ENCODE measurements at regions of chr16 and their contacts with region 1.

Region 1: DNA sequence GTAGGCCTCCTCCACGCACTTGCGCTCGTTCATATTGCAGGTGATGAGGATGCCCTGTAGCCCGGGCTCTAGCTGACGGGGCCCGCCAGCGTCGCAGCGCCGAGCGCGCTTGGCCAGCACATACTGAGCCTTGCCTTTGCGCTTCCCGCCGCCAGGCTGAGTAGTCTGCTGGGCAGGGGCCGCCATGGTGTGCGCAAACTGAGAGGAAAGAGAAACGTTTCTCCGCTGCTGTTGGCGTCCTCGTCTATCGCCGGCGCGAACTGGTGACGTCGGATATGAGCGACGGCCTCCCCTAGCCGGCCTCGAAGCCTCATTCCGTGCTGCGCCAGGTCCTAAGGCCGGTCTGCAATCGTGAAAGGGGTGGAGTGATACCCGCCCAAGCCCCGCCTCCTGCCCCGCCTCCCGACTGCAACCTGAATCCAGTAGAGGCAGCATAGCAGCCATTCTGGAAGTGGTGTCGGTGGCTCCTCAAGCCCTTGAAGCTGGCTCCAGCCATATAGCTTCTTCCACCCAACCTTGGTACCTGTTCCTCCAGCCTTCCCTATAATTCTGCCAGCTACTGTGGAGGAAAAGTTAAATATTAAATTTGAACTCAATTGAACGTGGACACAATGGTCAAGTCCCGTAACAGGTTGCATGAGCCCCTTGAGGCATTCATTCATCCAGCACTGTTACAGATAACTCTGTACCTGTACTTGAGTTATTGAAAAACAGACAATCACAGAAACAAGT is at the start of gene THUMPD1:
- DNase-seq: peak; percentile 96
- ATAC-seq: peak; percentile 91
- H3K4me3 ChIP-seq: peak within 1 kb of the TSS; percentile 74 to 100 (median 90)
- H3K4me3 Mint-ChIP-seq: peak within 1 kb of the TSS; percentile 95
- H3K27ac ChIP-seq: peak within 1 kb of the TSS; percentile 90 to 97
- H3K27ac Mint-ChIP-seq: peak within 1 kb of the TSS; percentile 97
- H3K4me1 ChIP-seq: peaks cover 19 to 23% of the 10 kb centered on the region in 2 donors
- H3K4me1 Mint-ChIP-seq: peaks cover 22% of the 10 kb centered on the region
- H3K27me3 ChIP-seq: no peaks in the 10 kb centered on the region
- H3K27me3 Mint-ChIP-seq: no peaks in the 10 kb centered on the region
- CTCF ChIP-seq: no peak
- total RNA-seq, gene THUMPD1: 52.5 and 54.3 TPM in 2 replicates

Region 2: DNA sequence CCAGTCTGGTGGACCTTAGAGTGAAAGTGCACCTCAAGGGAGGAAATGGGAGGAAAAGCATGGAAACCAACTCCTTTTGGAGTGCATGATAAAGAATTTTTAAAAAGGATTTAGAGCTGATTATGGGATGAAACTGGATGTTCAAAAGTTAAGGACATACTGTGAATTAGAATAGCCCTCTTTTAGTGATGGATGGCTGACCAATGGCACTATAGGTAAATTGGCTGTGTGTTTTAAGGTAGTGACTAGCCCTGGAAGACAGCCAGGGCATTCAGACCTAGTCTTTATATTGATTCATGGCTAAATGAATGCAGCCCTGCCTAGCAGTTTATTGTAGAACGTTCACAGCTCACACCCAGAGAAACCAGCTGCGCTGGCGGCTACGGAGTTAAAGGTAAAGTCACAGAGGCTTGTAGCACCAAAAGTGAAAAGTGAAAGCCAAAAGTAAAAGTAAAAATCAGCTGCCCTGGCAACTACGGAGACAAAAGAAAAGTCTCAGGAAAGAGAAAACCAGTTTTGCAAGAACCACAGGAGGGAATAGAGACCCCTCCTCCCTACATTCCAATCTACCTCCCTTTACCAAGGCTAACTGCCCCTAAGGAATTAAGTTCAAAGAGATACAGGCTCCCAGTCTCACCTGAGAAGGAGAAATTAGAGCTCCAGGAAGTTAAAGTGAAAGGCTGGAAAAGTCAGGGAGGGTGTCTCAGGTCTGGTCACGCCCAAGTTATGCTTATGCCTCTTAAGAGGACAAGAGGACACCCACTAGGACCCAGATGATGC is 66.0 kb before region 1 on chr16:
- CTCF ChIA-PET with region 1: interaction called, 13 read pairs
- POLR2A ChIA-PET with region 1: interaction called, 4 read pairs
- intact Hi-C with region 1: loop called (anchors 2 kb)
- DNase-seq: peak; percentile 63
- ATAC-seq: peak; percentile 63
- H3K4me3 ChIP-seq: peak overlapping the region; percentile 48 to 77 (median 61)
- H3K4me3 Mint-ChIP-seq: peak overlapping the region; percentile 95
- H3K27ac ChIP-seq: peak overlapping the region; percentile 87 to 94
- H3K27ac Mint-ChIP-seq: peak overlapping the region; percentile 91
- H3K4me1 ChIP-seq: peaks cover 45 to 59% of the 10 kb centered on the region in 2 donors
- H3K4me1 Mint-ChIP-seq: peaks cover 50% of the 10 kb centered on the region
- H3K27me3 ChIP-seq: no peaks in the 10 kb centered on the region
- H3K27me3 Mint-ChIP-seq: no peaks in the 10 kb centered on the region
- CTCF ChIP-seq: no peak

Region 3: DNA sequence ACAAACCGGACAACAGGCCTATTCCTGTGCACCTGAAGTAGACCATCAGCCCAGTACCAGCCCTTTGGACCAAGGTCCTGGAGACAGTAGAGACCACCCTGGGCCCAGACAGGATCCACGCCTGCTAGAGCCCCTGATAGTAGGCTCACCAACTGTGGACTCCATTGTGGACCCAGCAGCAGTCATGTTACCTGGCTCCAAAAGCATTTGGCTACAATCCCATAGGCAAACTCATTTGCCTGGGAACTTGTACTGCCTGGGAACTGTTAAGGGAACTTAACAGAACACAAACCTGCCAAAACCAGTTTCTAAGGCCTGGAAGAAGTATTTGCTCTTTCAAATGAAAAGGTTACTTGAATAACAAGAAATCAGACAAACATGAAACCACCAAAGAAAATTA is 34.3 kb before region 1 on chr16:
- CTCF ChIA-PET with region 1: no interaction called
- POLR2A ChIA-PET with region 1: no interaction called
- intact Hi-C with region 1: no loop called
- DNase-seq: no peak
- ATAC-seq: no peak
- H3K4me3 ChIP-seq: no peak overlapping the region
- H3K4me3 Mint-ChIP-seq: no peak overlapping the region
- H3K27ac ChIP-seq: no peak overlapping the region
- H3K27ac Mint-ChIP-seq: no peak overlapping the region
- H3K4me1 ChIP-seq: no peaks in the 10 kb centered on the region
- H3K4me1 Mint-ChIP-seq: no peaks in the 10 kb centered on the region
- H3K27me3 ChIP-seq: no peaks in the 10 kb centered on the region
- H3K27me3 Mint-ChIP-seq: no peaks in the 10 kb centered on the region
- CTCF ChIP-seq: no peak

Region 4: DNA sequence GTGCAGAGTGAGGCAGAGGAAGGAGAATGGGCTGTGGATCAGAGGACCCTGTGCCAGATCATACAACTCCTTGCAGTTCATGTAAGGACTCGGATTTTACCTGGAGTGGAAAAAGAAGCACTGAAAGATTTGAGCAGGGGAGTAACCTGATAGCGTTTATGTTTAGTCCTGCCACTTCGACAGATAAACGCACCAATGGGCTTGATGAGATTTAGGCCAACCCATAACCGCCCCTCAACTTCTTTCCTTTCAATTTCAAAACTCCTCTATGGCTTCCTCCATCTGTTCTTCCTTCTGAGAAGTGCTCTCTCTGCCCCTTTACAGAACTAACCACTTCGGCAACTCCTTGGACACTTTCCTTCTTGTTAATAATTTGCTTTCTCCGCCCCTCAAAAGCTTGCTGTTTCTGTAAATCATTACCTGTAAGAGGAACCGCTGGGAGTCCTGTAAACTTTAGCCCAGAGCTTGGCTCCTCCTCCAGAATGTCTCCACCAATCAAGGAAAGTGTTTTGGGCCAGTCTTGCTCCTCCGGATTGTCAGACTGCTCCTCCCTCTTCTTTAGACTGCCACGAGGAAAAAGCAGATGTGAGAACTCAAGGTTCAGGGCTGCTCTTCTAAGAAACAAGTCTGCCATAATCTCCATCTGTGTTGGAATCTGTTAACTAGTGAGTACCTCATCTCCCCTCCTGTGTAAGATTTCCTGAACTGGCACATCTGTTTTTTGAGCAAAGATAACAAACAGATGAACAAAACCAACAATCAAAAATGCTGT is 21.9 kb after region 1 on chr16 and contains the start of gene ACSM3:
- CTCF ChIA-PET with region 1: no interaction called
- POLR2A ChIA-PET with region 1: interaction called, 5 read pairs
- intact Hi-C with region 1: loop called (anchors 1 kb)
- DNase-seq: peak; percentile 89
- ATAC-seq: peak; percentile 99
- H3K4me3 ChIP-seq: peak within 1 kb of the TSS; percentile 43 to 78 (median 62)
- H3K4me3 Mint-ChIP-seq: peak within 1 kb of the TSS; percentile 86
- H3K27ac ChIP-seq: peak within 1 kb of the TSS; percentile 36 to 63
- H3K27ac Mint-ChIP-seq: peak within 1 kb of the TSS; percentile 80
- H3K4me1 ChIP-seq: peaks cover 10 to 15% of the 10 kb centered on the region in 2 donors
- H3K4me1 Mint-ChIP-seq: peaks cover 13% of the 10 kb centered on the region
- H3K27me3 ChIP-seq: no peaks in the 10 kb centered on the region
- H3K27me3 Mint-ChIP-seq: no peaks in the 10 kb centered on the region
- CTCF ChIP-seq: no peak
- total RNA-seq, gene ACSM3: 76.3 and 84.2 TPM in 2 replicates

Region 5: DNA sequence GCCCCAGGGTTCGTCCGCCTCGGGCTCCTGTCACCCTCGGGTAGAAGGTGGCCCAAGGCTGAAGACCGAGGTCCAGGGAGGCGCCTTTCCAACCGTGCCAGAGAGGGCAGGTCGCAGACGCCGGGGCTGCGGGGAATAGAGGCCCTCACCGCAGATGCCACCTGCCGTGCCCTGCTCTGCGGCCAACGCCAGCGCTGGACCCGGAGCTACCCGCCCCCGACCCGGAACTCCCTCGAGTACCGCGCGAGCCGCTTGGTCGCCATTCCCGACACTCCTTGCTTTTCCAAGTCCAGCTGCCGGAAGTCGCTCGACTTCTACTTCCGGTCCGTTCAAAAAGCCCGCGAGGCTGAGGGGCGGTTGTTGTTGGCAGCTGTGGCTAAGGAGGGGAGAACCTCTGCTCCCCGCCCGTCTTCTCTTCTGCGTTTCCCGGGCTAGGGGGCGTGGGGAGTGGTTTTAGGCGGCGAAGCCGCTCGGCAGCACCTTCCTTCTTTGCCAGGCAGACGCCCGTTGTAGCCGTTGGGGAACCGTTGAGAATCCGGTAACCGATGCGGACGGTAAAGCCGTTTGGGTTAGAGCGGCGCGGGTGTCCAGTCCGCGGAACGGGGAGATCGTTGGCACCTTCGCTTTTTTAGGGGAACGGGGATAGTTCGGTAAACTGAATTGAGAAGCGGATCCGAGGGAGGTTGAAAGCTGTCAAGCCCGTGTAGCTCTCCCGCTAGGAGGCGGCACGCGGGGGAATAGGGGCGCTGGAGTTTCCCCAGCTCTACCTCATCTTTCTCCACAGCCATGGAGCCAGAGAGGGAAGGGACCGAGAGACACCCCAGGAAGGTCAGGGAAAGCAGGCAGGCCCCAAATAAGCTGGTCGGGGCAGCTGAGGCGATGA is 64.7 kb after region 1 on chr16 and contains the starts of genes ERI2 and REXO5:
- CTCF ChIA-PET with region 1: no interaction called
- POLR2A ChIA-PET with region 1: no interaction called
- intact Hi-C with region 1: loop called (anchors 1 kb)
- DNase-seq: peak; percentile 79
- ATAC-seq: peak; percentile 86
- H3K4me3 ChIP-seq: peak within 1 kb of the TSS; percentile 78 to 85 (median 85)
- H3K4me3 Mint-ChIP-seq: peak within 1 kb of the TSS; percentile 91
- H3K27ac ChIP-seq: peak within 1 kb of the TSS; percentile 47 to 61
- H3K27ac Mint-ChIP-seq: peak within 1 kb of the TSS; percentile 75
- H3K4me1 ChIP-seq: peaks cover 5 to 19% of the 10 kb centered on the region in 2 donors
- H3K4me1 Mint-ChIP-seq: peaks cover 15% of the 10 kb centered on the region
- H3K27me3 ChIP-seq: no peaks in the 10 kb centered on the region
- H3K27me3 Mint-ChIP-seq: no peaks in the 10 kb centered on the region
- CTCF ChIP-seq: peak; percentile 37
- total RNA-seq, gene ERI2: 3.9 and 4.9 TPM in 2 replicates
- total RNA-seq, gene REXO5: 0.97 and 1.3 TPM in 2 replicates

Region 6: GRCh38 chr16:21244518-21245215 is 502.9 kb after region 1 on chr16:
- CTCF ChIA-PET with region 1: no interaction called
- POLR2A ChIA-PET with region 1: no interaction called
- intact Hi-C with region 1: no loop called
- DNase-seq: no peak
- ATAC-seq: no peak
- H3K4me3 ChIP-seq: no peak overlapping the region
- H3K4me3 Mint-ChIP-seq: no peak overlapping the region
- H3K27ac ChIP-seq: no peak overlapping the region
- H3K27ac Mint-ChIP-seq: no peak overlapping the region
- H3K4me1 ChIP-seq: peaks cover under 1 to 1% of the 10 kb centered on the region in 2 donors
- H3K4me1 Mint-ChIP-seq: peaks cover 2% of the 10 kb centered on the region
- H3K27me3 ChIP-seq: peaks cover 0 to 4% (median 1%) of the 10 kb centered on the region in 4 experiments
- H3K27me3 Mint-ChIP-seq: peaks cover 12% of the 10 kb centered on the region
- CTCF ChIP-seq: no peak

Measured in B cell (primary cell).